Esophagus muscularis mucosa (tissue), 4 donors: ENCODE measurements at regions of chr7 and their contacts with region 1.

Region 1: GRCh38 chr7:137146012-137146455 is 197.5 kb downstream of the PTN start:
- DNase-seq: no peak
- H3K4me3 ChIP-seq: no peak overlapping the region
- H3K27ac ChIP-seq: peak overlapping the region; percentile 21 to 75 (median 72)
- H3K4me1 ChIP-seq: peaks cover 8 to 59% (median 40%) of the 10 kb centered on the region in 4 donors
- H3K27me3 ChIP-seq: no peaks in the 10 kb centered on the region
- CTCF ChIP-seq: no peak
- EP300 ChIP-seq: no peak
- POLR2A ChIP-seq: no peak

Region 2: DNA sequence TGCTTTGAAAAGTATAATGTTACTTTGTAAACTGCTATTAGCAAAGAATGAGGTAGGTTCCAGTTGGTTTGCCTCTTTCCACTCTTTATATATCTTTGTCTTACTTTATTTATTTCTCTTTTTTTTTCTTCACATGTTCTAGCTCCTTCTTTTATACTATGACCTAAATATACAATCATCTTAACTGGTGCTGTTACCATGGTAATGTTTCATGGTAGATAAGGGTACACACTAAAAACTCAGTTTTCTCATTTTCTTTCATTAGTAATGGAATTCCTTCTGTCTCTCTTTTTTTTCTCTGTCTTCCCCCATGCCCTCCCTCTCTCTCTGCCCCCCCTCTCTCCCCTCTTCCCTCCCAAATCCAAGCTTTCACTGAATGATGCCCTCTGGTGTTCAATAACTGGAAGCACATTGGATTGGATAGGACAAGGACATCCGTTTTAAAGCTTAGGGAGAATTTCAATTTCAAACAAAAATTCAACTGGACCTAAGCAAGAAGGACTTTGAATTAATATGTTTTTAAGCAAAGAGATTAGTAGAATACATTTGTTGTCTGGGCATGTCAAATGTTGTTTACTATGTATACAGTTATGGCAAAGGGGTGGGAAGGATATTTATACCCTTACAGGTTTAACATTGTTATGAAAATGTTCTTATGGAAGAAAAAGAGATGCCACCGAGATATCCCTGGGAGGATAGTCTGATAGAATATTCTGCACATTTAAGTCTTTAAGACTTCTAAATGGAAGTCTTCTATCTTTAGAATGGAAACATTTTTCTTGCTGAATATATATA is 271.6 kb before region 1 on chr7:
- intact Hi-C with region 1: loop called (anchors 10 kb)
- DNase-seq: no peak
- H3K4me3 ChIP-seq: no peak overlapping the region
- H3K27ac ChIP-seq: no peak overlapping the region
- H3K4me1 ChIP-seq: peaks cover 3 to 45% (median 28%) of the 10 kb centered on the region in 4 donors
- H3K27me3 ChIP-seq: peaks cover 0 to 21% (median 6%) of the 10 kb centered on the region in 4 donors
- CTCF ChIP-seq: peak in 1 of 3 experiments; percentile 39
- EP300 ChIP-seq: no peak
- POLR2A ChIP-seq: no peak

Region 3: DNA sequence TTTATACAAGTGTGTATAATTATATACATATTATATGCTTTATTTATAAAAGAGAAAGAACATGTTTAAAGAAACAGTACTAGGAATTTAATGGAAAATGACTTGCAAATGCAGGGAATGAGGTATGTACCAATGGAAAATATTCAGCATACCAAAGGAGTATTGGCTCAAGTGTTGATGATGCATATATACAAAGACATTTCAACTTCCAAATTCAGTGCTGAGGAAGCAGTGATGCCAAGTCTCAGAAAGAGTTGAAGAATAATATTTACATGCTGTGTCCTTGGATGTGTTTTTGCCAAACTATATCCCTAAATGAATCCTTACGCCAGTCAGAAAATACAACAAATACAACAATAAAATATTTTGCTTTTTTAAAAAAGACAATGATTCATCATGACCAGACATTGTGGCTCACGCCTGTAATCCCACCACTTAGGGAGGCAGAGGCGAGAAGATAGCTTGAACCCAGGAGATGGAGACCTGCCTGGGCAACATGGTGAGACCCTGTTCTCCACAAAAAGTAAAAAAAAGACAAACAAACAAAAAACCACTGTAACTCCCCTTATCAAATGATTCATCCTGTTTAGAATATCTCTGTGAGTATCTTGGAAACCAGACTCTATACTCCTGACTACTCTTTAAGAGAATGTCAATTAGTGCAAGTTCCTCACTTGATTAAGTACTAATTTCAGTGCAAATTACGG is 120.4 kb before region 1 on chr7:
- intact Hi-C with region 1: loop called (anchors 10 kb)
- DNase-seq: no peak
- H3K4me3 ChIP-seq: peak overlapping the region in 1 of 4 donors; percentile 3
- H3K27ac ChIP-seq: peak overlapping the region; percentile 16 to 72 (median 58)
- H3K4me1 ChIP-seq: peaks cover 5 to 12% (median 9%) of the 10 kb centered on the region in 4 donors
- H3K27me3 ChIP-seq: no peaks in the 10 kb centered on the region
- CTCF ChIP-seq: no peak
- EP300 ChIP-seq: no peak
- POLR2A ChIP-seq: no peak

Region 4: GRCh38 chr7:137110091-137110509 is 35.9 kb before region 1 on chr7:
- intact Hi-C with region 1: no loop called
- DNase-seq: no peak
- H3K4me3 ChIP-seq: no peak overlapping the region
- H3K27ac ChIP-seq: no peak overlapping the region
- H3K4me1 ChIP-seq: peaks cover 0 to 4% (median 0%) of the 10 kb centered on the region in 4 donors
- H3K27me3 ChIP-seq: no peaks in the 10 kb centered on the region
- CTCF ChIP-seq: peak in 1 of 3 experiments; percentile 5
- EP300 ChIP-seq: no peak
- POLR2A ChIP-seq: no peak